GM12878 (cell line): ENCODE measurements at regions of chr7 and their contacts with region 1.

Region 1: DNA sequence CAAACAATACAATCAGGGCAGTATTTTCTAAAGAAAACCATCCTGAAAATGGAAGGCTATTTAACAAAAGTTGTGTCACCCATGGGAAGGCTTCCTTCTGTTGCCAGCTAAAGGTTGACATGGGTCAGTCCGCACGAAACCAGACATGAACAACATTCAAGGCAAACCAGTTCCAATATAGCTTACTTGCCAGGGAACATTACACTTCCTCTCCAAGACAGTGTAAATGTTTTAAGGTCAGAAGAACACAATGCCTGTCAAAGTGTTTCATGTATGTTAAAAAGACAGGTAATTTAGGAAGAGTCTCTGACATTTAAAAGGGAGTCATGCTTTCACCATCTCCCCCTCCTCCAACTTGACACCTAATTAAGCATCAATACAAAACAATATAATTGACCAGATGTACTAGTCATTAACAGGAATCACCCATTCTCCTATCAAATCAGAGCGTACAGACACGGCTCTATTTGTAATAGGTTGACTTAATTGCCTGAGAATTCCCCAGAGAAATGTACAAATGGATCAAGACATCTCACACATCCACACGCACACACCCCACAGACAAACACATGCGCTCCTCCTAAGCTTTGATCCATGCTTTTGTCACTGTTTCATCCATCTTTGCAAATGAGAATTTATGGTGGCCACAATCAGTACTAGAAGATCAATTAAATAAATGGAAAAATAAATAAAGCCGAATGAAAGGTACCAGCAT is 69.5 kb downstream of the CACNA2D1 start:
- DNase-seq: no peak
- ATAC-seq: peak; percentile 5; the same call in 2 of the 3 replicates
- H3K4me3 ChIP-seq: no peak overlapping the region
- H3K27ac ChIP-seq: no peak overlapping the region
- H3K4me1 ChIP-seq: no peaks in the 10 kb centered on the region
- H3K27me3 ChIP-seq: no peaks in the 10 kb centered on the region
- CTCF ChIP-seq: no peak
- EP300 ChIP-seq: no peak
- POLR2A ChIP-seq: no peak
- RAD21 ChIP-seq: no peak

Region 2: DNA sequence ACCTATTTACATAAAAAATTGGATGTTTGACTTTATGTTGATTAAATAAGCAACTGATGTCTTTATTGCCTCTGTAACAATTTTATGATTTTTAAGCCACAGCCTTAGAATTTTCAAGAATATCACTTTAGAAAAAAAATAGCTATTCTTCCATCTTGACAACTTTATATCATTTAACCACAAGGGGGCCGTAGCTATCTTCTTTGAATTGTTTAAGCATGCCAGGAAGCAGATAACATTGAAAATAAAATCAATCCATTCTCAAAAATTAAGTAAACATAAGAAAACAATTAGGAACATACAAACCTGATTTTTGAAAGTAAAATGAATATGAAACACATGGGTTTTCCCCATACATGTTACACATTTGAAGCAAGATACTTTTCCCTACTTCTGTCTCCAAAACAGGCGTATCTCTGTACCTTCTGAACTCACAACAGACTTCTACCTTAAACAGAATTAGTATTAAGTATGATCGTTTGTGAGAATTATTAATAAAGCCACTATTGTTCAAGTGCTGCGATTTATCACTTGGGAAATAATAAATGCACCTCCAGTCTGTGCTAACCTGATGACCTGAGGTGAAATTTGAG is 139.5 kb before region 1 on chr7:
- CTCF ChIA-PET with region 1: interaction called, 3 read pairs
- POLR2A ChIA-PET with region 1: no interaction called
- RAD21 ChIA-PET with region 1: interaction called, 13 read pairs
- SMC1A ChIA-PET with region 1: interaction called, 10 read pairs
- in situ Hi-C with region 1: no loop called
- intact Hi-C with region 1: no loop called
- DNase-seq: no peak
- ATAC-seq: peak; percentile 60
- H3K4me3 ChIP-seq: no peak overlapping the region
- H3K27ac ChIP-seq: no peak overlapping the region
- H3K4me1 ChIP-seq: no peaks in the 10 kb centered on the region
- H3K27me3 ChIP-seq: no peaks in the 10 kb centered on the region
- CTCF ChIP-seq: peak; percentile 34 to 51 (median 49); a peak in 5 of 6 replicates
- EP300 ChIP-seq: no peak
- POLR2A ChIP-seq: no peak
- RAD21 ChIP-seq: peak; percentile 69

Region 3: GRCh38 chr7:82348251-82348650 is 25.8 kb before region 1 on chr7:
- CTCF ChIA-PET with region 1: interaction called, 7 read pairs
- POLR2A ChIA-PET with region 1: interaction called, 3 read pairs
- RAD21 ChIA-PET with region 1: interaction called, 7 read pairs
- SMC1A ChIA-PET with region 1: interaction called, 13 read pairs
- in situ Hi-C with region 1: no loop called
- intact Hi-C with region 1: no loop called
- DNase-seq: no peak
- ATAC-seq: peak; percentile 16; the same call in 2 of the 3 replicates
- H3K4me3 ChIP-seq: no peak overlapping the region
- H3K27ac ChIP-seq: no peak overlapping the region
- H3K4me1 ChIP-seq: no peaks in the 10 kb centered on the region
- H3K27me3 ChIP-seq: no peaks in the 10 kb centered on the region
- CTCF ChIP-seq: no peak
- EP300 ChIP-seq: no peak
- POLR2A ChIP-seq: no peak
- RAD21 ChIP-seq: no peak

Region 4: DNA sequence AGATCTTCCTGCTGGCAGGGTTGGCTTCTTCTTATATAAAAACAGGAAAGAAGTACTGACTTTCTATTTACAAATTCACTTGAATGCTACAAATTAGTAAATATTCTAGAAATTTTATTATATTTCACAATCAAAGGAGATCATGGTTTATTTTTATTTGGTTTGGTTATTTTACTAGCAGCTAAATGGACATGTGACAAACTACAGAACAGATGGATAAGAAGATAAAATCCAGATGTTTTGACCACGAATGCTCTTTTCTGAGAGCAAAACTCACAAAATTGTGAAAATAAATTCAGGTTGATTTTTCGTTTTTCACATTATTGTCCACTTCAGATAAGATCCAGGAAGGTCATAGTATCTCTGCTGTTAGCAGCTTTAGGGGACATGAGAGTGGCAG is 14.1 kb after region 1 on chr7:
- CTCF ChIA-PET with region 1: interaction called, 5 read pairs
- POLR2A ChIA-PET with region 1: interaction called, 24 read pairs
- RAD21 ChIA-PET with region 1: interaction called, 18 read pairs
- SMC1A ChIA-PET with region 1: interaction called, 158 read pairs
- in situ Hi-C with region 1: no loop called
- intact Hi-C with region 1: no loop called
- DNase-seq: no peak
- ATAC-seq: no peak
- H3K4me3 ChIP-seq: no peak overlapping the region
- H3K27ac ChIP-seq: no peak overlapping the region
- H3K4me1 ChIP-seq: no peaks in the 10 kb centered on the region
- H3K27me3 ChIP-seq: no peaks in the 10 kb centered on the region
- CTCF ChIP-seq: no peak
- EP300 ChIP-seq: no peak
- POLR2A ChIP-seq: no peak
- RAD21 ChIP-seq: no peak

Region 5: DNA sequence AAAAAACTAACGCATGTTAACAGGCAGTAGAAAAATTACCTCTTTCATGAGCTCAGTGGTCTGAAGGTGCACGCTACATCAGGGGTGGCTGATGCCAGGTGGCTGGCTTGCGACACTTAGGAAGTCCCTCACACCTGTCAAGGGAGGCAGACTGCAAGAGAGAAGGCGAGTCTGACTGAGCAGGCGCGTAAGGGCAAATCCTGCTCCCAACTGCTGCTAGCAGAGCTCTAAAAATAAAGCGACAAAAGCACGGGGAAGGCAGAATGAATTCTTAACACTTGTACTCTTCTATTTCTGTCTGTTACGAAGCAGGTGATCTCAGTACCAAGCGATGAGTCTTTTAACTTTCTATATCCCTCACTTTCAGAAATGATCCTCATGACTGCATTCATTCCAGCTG is 36.4 kb after region 1 on chr7:
- CTCF ChIA-PET with region 1: interaction called, 3 read pairs
- POLR2A ChIA-PET with region 1: no interaction called
- RAD21 ChIA-PET with region 1: interaction called, 4 read pairs
- SMC1A ChIA-PET with region 1: interaction called, 10 read pairs
- in situ Hi-C with region 1: no loop called
- intact Hi-C with region 1: no loop called
- DNase-seq: no peak
- ATAC-seq: peak; percentile 5; the same call in 1 of the 3 replicates
- H3K4me3 ChIP-seq: no peak overlapping the region
- H3K27ac ChIP-seq: no peak overlapping the region
- H3K4me1 ChIP-seq: no peaks in the 10 kb centered on the region
- H3K27me3 ChIP-seq: no peaks in the 10 kb centered on the region
- CTCF ChIP-seq: no peak
- EP300 ChIP-seq: no peak
- POLR2A ChIP-seq: no peak
- RAD21 ChIP-seq: no peak

Region 6: DNA sequence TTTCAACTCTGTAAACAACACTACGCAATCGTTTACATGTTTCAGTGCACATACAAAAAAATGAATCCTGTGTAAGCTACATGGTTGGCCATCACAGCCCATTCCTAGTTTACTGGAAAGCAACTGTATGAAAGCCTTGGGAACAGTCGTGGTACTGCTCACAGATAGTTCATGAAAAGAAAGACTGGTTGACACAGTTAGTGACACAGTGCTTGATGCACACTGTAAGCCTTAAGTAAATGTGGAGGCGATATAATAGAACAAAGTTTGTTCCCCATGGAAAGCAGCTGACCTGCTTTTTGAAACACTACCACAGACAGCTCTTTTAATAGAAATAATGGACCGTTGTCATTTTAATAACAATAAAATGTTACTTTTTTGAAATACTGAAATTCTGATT is 64.4 kb after region 1 on chr7:
- CTCF ChIA-PET with region 1: no interaction called
- POLR2A ChIA-PET with region 1: no interaction called
- RAD21 ChIA-PET with region 1: interaction called, 9 read pairs
- SMC1A ChIA-PET with region 1: interaction called, 11 read pairs
- in situ Hi-C with region 1: no loop called
- intact Hi-C with region 1: no loop called
- DNase-seq: no peak
- ATAC-seq: peak; percentile 32
- H3K4me3 ChIP-seq: no peak overlapping the region
- H3K27ac ChIP-seq: no peak overlapping the region
- H3K4me1 ChIP-seq: no peaks in the 10 kb centered on the region
- H3K27me3 ChIP-seq: peaks cover 2 to 6% of the 10 kb centered on the region in 2 experiments; a peak in 2 of 4 replicates
- CTCF ChIP-seq: no peak
- EP300 ChIP-seq: no peak
- POLR2A ChIP-seq: no peak
- RAD21 ChIP-seq: no peak